ENCODE measurements at regions of chr3 and their contacts with region 1.

Region 1: GRCh38 chr3:197511130-197511529 is 44.6 kb downstream of the BDH1 start:
- DNase-seq: no peak
- H3K4me3 ChIP-seq: no peak overlapping the region
- H3K27ac ChIP-seq: no peak overlapping the region
- H3K4me1 ChIP-seq: peaks cover 0 to 8% of the 10 kb centered on the region in 2 donors
- H3K27me3 ChIP-seq: no peaks in the 10 kb centered on the region
- CTCF ChIP-seq: no peak
- POLR2A ChIP-seq: no peak

Region 2: DNA sequence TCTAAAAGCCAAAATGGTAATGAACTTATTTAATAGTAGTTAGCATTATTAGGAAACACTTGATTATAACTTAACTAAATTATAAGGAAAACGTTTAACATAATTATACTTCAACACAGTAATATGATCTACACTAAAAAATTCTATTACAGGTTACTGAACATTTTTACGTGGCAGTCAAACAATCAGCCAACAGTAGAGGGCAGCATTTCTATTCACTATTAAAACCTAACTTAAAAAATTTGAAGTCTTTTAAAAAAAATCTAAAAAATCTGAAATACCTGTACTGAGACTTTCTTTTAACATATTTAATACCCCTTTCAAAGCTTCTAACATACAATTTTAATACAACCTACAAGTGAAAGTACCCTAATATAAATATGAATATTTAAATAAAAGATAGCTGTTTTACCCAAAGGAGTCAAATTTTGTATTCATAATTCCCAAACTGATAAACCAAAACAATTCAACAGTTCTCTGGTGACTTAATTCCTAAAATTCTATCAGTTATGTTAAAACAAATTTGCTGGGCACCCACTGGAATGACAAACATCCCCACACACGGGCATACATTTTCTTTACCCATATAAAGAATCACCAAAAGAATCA is 254.2 kb before region 1 on chr3:
- intact Hi-C with region 1: loop called (anchors 5 kb)
- DNase-seq: peak in 5 of 7 donors; percentile 23 to 62 (median 43)
- H3K4me3 ChIP-seq: no peak overlapping the region
- H3K27ac ChIP-seq: no peak overlapping the region
- H3K4me1 ChIP-seq: no peaks in the 10 kb centered on the region
- H3K27me3 ChIP-seq: no peaks in the 10 kb centered on the region
- CTCF ChIP-seq: peak; percentile 54 to 81 (median 70)
- POLR2A ChIP-seq: no peak